Naive thymus-derived CD4-positive, alpha-beta T cell (primary cell): ENCODE measurements at regions of chr13 and their contacts with region 1.

Region 1: GRCh38 chr13:30306762-30307193 is 573 bp downstream of the KATNAL1 start:
- DNase-seq: peak; percentile 78 to 91 (median 88)
- ATAC-seq: peak; percentile 95
- H3K4me3 ChIP-seq: peak overlapping the region; percentile 96
- H3K4me3 Mint-ChIP-seq: peak overlapping the region; percentile 79 to 92 (median 89)
- H3K27ac ChIP-seq: peak overlapping the region; percentile 78
- H3K27ac Mint-ChIP-seq: peak overlapping the region in 8 of 9 donors; percentile 37 to 89 (median 82)
- H3K4me1 ChIP-seq: peaks cover 0 to 4% of the 10 kb centered on the region in 2 donors
- H3K4me1 Mint-ChIP-seq: peaks cover 0 to 48% (median 7%) of the 10 kb centered on the region in 7 donors
- H3K27me3 ChIP-seq: no peaks in the 10 kb centered on the region
- H3K27me3 Mint-ChIP-seq: no peaks in the 10 kb centered on the region

Region 2: DNA sequence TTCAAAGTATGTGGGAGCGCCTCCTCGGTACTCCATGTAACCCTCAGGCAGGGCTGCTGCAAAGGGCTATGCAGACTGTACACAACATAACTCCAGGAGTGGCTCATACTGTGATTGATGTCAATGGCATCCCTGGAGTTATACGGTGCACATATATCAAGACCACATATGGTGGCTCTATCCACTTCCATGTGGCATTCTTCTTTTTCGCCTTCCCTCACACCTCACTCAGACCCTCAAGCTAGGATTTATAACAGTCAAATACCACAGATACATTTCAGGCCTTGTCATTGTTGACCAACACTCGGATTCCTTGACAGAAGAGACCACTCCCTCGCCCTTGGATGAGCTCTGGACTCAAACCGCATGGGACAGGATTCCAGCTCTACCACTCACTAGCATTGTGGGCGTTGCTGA is 445.1 kb before region 1 on chr13:
- CTCF ChIA-PET with region 1: no interaction called
- POLR2A ChIA-PET with region 1: no interaction called
- intact Hi-C with region 1: no loop called
- DNase-seq: no peak
- ATAC-seq: no peak
- H3K4me3 ChIP-seq: no peak overlapping the region
- H3K4me3 Mint-ChIP-seq: no peak overlapping the region
- H3K27ac ChIP-seq: no peak overlapping the region
- H3K27ac Mint-ChIP-seq: peak overlapping the region in 2 of 9 donors; percentile 11 to 65
- H3K4me1 ChIP-seq: no peaks in the 10 kb centered on the region
- H3K4me1 Mint-ChIP-seq: peaks cover 0 to 10% (median 0%) of the 10 kb centered on the region in 7 donors
- H3K27me3 ChIP-seq: no peaks in the 10 kb centered on the region
- H3K27me3 Mint-ChIP-seq: peaks cover 5 to 15% (median 8%) of the 10 kb centered on the region in 5 donors

Region 3: GRCh38 chr13:30148171-30148754 is 158.5 kb before region 1 on chr13:
- CTCF ChIA-PET with region 1: no interaction called
- POLR2A ChIA-PET with region 1: interaction called, 3 read pairs
- intact Hi-C with region 1: loop called in 1 of 2 experiments (anchors 2 kb)
- DNase-seq: peak in 7 of 9 donors; percentile 43 to 83 (median 69)
- ATAC-seq: peak; percentile 89
- H3K4me3 ChIP-seq: peak overlapping the region; percentile 7
- H3K4me3 Mint-ChIP-seq: peak overlapping the region; percentile 43 to 81 (median 75)
- H3K27ac ChIP-seq: peak overlapping the region; percentile 37
- H3K27ac Mint-ChIP-seq: peak overlapping the region; percentile 87 to 98 (median 93)
- H3K4me1 ChIP-seq: peaks cover 59 to 83% of the 10 kb centered on the region in 2 donors
- H3K4me1 Mint-ChIP-seq: peaks cover 41 to 96% (median 88%) of the 10 kb centered on the region in 7 donors
- H3K27me3 ChIP-seq: no peaks in the 10 kb centered on the region
- H3K27me3 Mint-ChIP-seq: no peaks in the 10 kb centered on the region

Region 4: GRCh38 chr13:30395192-30396084 is 88.7 kb after region 1 on chr13:
- CTCF ChIA-PET with region 1: no interaction called
- POLR2A ChIA-PET with region 1: interaction called, 4 read pairs
- intact Hi-C with region 1: loop called (anchors 2 to 5 kb)
- DNase-seq: peak; percentile 22 to 83 (median 71)
- ATAC-seq: peak; percentile 82
- H3K4me3 ChIP-seq: peak overlapping the region; percentile 71
- H3K4me3 Mint-ChIP-seq: peak overlapping the region; percentile 83 to 97 (median 88)
- H3K27ac ChIP-seq: peak overlapping the region; percentile 78
- H3K27ac Mint-ChIP-seq: peak overlapping the region; percentile 90 to 97 (median 95)
- H3K4me1 ChIP-seq: peaks cover 16 to 31% of the 10 kb centered on the region in 2 donors
- H3K4me1 Mint-ChIP-seq: peaks cover 17 to 58% (median 54%) of the 10 kb centered on the region in 7 donors
- H3K27me3 ChIP-seq: no peaks in the 10 kb centered on the region
- H3K27me3 Mint-ChIP-seq: no peaks in the 10 kb centered on the region

Region 5: DNA sequence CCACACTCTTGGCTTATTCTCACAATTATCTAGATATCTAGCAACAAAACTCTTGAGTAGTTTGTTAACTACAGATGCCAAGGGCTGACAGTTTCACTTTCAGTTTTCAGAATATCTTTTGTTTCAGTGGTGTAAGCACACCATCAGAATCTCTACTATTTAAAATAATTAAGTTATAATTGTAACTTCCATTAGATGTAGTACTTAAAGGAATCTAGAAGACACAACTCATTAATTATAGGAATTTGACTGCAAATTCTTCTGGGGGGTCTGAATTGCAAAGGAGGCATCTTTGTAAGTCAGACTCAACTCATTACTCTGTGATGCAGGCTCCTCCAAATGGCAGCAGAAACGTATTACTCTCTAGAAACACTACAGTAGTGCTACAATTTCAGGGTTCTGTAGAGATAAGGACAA is 266.1 kb after region 1 on chr13:
- CTCF ChIA-PET with region 1: no interaction called
- POLR2A ChIA-PET with region 1: no interaction called
- intact Hi-C with region 1: loop called (anchors 2 to 5 kb)
- DNase-seq: peak in 7 of 9 donors; percentile 19 to 65 (median 49)
- ATAC-seq: peak; percentile 69
- H3K4me3 ChIP-seq: peak overlapping the region; percentile 55
- H3K4me3 Mint-ChIP-seq: peak overlapping the region; percentile 66 to 88 (median 81)
- H3K27ac ChIP-seq: peak overlapping the region; percentile 81
- H3K27ac Mint-ChIP-seq: peak overlapping the region; percentile 88 to 97 (median 94)
- H3K4me1 ChIP-seq: peaks cover 13 to 24% of the 10 kb centered on the region in 2 donors
- H3K4me1 Mint-ChIP-seq: peaks cover 14 to 42% (median 36%) of the 10 kb centered on the region in 7 donors
- H3K27me3 ChIP-seq: no peaks in the 10 kb centered on the region
- H3K27me3 Mint-ChIP-seq: peaks cover 0 to 3% (median 0%) of the 10 kb centered on the region in 5 donors